ENCODE measurements at regions of chr2 and their contacts with region 1.

Region 1: DNA sequence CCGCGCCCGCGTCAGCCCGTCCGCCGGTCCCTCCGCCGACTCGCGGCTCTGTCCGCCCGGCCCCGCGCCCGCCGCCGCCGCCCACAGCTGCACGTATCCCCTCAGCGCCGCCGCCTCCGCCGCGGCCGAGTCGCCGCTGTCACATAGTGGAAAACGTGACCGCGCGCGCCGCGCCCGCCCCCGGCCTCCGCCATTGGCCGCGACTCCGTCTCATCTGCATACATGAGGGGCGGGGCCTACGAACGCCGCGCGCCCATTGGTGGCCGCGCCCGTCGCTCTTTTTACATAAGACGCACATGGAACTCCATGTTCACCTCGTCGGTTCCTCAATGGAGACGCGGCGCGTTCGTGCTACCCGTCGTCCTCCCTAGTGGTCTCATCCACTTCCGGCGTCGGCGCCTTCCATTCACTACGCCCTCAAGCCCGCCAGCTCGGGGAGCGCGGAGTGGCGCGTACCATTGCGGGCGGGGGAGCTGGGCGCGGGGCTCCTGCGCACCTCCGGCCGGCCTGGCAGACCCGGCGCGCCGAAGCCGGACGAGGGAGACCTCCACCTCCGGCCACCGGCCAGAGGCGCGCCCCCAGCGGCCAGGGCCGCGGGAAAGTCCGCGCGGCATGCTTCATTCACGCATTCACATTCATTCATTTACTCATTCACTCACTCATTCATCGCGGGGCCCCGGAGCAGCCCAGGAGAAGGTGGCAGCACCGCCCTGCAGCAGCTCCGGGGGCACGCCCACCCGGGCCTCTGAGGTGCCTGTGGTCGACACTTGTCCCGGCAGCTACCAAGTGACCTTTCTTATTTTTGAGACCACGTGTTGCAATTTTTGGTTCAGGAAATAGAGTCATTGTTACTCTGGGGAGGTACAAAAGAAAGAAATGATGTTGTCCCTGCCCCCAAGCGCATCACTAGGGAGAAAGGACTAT is 502 bp upstream of the PER2 start:
- H3K4me3 Mint-ChIP-seq: peak overlapping the region; percentile 92
- H3K27ac Mint-ChIP-seq: peak overlapping the region; percentile 96
- H3K4me1 Mint-ChIP-seq: peaks cover 48% of the 10 kb centered on the region
- H3K27me3 Mint-ChIP-seq: peaks cover 11% of the 10 kb centered on the region

Region 2: GRCh38 chr2:237824085-237824484 is 464.8 kb before region 1 on chr2:
- intact Hi-C with region 1: no loop called
- H3K4me3 Mint-ChIP-seq: no peak overlapping the region
- H3K27ac Mint-ChIP-seq: no peak overlapping the region
- H3K4me1 Mint-ChIP-seq: peaks cover 3% of the 10 kb centered on the region
- H3K27me3 Mint-ChIP-seq: no peaks in the 10 kb centered on the region

Region 3: GRCh38 chr2:238256594-238257104 is 32.3 kb before region 1 on chr2:
- intact Hi-C with region 1: no loop called
- H3K4me3 Mint-ChIP-seq: no peak overlapping the region
- H3K27ac Mint-ChIP-seq: no peak overlapping the region
- H3K4me1 Mint-ChIP-seq: no peaks in the 10 kb centered on the region
- H3K27me3 Mint-ChIP-seq: no peaks in the 10 kb centered on the region

Region 4: DNA sequence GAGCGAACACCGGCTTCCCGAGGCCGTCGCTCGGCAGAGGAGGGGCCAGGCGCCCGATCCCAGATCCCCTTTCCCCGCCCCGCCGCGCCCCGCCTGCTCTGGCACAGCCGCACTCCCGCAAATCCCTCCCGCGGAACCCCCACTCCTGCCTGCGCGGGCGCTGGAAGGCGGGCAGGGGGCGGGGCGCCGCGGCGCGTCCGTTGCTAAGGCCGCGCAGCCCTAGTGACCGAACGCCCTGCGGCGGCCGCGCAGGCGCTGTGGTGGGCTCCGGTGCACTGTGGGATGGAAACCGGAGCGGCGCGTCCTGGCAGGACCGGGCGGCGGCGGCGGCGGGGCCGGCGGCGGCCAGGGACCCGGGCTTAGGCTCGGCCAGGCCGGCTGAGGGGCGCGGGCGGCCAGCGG is 31.3 kb after region 1 on chr2 and contains the start of gene TRAF3IP1:
- intact Hi-C with region 1: loop called (anchors 2 kb)
- H3K4me3 Mint-ChIP-seq: peak within 1 kb of the TSS; percentile 75
- H3K27ac Mint-ChIP-seq: no peak within 1 kb of the TSS
- H3K4me1 Mint-ChIP-seq: peaks cover 11% of the 10 kb centered on the region
- H3K27me3 Mint-ChIP-seq: peaks cover 28% of the 10 kb centered on the region

Measured in dendritic cell treated with granulocyte-macrophage colony-stimulating factor and Interleukin-4, amounts not matched to agents 40 ng/mL and 50 ng/mL, for 4 days (primary cell).